Sigmoid colon (tissue), 7 donors: ENCODE measurements at regions of chr16 and their contacts with region 1.

Region 1: DNA sequence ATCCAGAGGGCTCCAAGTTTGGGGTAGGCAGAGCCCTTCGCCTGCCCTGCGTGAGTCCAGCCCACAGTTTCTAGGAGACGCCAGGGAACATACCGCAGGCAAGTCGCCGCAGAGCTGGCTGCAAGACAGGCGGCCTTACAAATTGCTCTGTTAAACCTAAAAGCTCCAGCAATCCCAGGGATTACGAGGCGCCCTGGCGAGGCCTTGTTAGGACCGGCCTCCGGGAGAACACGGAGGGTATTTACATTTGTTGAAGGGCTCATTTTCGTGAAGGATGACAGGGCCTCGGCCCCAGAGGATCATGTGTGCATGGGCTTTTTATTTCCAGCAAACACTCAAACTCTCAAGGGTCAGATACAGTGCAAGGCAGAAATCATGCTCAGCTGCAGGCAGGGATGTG is 77.6 kb upstream of the FOXF1 start:
- DNase-seq: peak; percentile 95
- H3K4me3 ChIP-seq: no peak overlapping the region
- H3K27ac ChIP-seq: peak overlapping the region; percentile 81 to 91 (median 87)
- H3K4me1 ChIP-seq: peaks cover 0 to 67% (median 61%) of the 10 kb centered on the region in 4 donors
- H3K27me3 ChIP-seq: no peaks in the 10 kb centered on the region
- CTCF ChIP-seq: no peak
- EP300 ChIP-seq: peak; percentile 81 to 97 (median 86)
- POLR2A ChIP-seq: no peak

Region 2: DNA sequence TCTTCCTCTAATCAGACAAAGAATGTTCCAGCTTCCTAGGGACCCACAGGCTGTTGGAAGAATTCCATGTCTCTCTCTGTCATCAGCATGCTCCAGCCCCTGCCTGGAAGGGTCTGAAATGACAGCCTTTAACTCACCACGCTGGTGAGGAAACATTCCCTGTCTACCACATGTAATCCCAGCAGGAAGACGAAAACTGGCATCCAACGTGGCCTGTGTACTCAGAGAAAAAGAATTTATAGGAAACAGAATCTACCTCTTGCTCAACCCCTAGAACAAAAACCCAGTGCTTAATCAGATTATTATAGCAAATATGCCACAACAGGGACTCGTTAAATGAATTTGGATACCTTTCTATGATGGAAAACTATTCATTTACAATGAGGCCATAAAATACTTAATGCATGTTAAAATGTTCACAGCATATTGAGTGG is 69.6 kb before region 1 on chr16:
- intact Hi-C with region 1: loop called (anchors 2 kb)
- DNase-seq: peak; percentile 88
- H3K4me3 ChIP-seq: no peak overlapping the region
- H3K27ac ChIP-seq: peak overlapping the region; percentile 83 to 89 (median 85)
- H3K4me1 ChIP-seq: peaks cover 0 to 56% (median 46%) of the 10 kb centered on the region in 4 donors
- H3K27me3 ChIP-seq: no peaks in the 10 kb centered on the region
- CTCF ChIP-seq: no peak
- EP300 ChIP-seq: peak in 3 of 4 donors; percentile 25 to 84 (median 52)
- POLR2A ChIP-seq: no peak

Region 3: DNA sequence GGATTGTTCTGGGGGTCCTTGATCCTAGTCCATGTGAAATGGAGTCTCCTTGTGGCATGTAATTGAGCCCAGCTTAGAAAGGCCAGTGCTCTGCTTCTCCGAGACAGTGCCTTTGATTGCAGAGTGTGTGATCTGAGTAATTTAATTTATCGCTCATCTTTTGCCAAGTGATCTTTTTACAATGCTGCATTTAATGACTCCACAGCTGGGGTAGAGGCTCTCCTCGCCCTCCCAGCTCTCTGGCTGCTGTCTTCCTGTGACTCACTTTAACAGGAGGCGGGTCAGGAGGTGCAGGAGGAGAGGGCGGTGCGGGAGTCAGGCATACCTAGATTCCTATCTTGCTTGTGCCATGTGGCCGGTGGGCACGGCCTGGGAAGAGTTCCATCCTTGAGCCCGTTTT is 35.8 kb before region 1 on chr16:
- intact Hi-C with region 1: loop called (anchors 2 kb)
- DNase-seq: peak; percentile 95
- H3K4me3 ChIP-seq: peak overlapping the region in 1 of 4 donors; percentile 12
- H3K27ac ChIP-seq: peak overlapping the region; percentile 88 to 94 (median 91)
- H3K4me1 ChIP-seq: peaks cover 0 to 28% (median 23%) of the 10 kb centered on the region in 4 donors
- H3K27me3 ChIP-seq: no peaks in the 10 kb centered on the region
- CTCF ChIP-seq: no peak
- EP300 ChIP-seq: peak; percentile 52 to 92 (median 73)
- POLR2A ChIP-seq: no peak

Region 4: GRCh38 chr16:86498661-86499439 is 66.2 kb after region 1 on chr16:
- intact Hi-C with region 1: loop called (anchors 2 kb)
- DNase-seq: peak; percentile 88
- H3K4me3 ChIP-seq: peak overlapping the region; percentile 65 to 84 (median 68)
- H3K27ac ChIP-seq: peak overlapping the region; percentile 99 to 100 (median 99)
- H3K4me1 ChIP-seq: peaks cover 0 to 81% (median 59%) of the 10 kb centered on the region in 4 donors
- H3K27me3 ChIP-seq: peaks cover 0 to 31% (median 0%) of the 10 kb centered on the region in 3 donors
- CTCF ChIP-seq: no peak
- EP300 ChIP-seq: no peak
- POLR2A ChIP-seq: peak; percentile 8 to 9

Region 5: DNA sequence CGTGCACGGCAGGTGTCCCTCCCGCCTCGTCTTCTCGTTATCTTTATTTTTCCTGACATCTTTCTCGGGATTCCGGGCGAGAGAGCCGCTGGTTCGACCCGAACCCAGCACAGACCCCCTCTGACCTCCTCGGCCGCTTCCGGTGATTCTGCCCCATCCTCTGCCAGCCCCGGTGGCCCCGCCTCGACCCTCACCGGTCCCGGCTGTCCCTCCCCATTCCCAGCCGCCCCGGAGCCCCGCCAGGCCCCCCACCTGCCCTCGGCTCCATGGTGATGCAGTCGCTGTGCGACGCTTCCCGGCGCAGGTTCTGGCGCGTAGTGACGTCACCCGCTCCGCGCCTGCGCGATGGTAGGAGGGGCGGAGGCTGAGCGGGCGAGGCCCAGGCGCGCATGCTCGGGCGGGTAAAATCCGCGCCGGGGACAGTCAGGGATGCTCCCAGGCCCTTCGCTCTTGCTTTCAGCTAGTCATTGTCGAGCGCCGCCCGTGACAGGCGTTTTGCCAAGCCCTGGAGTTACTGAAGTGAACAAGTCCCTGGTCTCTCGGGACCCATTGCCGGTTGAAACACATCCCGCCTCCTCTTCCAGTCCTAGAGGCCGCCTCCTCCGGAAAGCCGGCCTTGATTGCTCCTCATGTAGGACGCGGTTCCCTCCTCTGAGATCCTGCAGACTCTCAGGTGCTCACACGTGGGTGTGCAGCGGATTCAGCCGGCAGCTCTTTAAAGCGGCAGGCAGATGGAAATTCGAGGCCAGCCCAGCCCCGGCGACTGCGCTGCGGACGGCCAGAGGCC is 122.4 kb after region 1 on chr16 and contains the start of gene MTHFSD:
- intact Hi-C with region 1: no loop called
- DNase-seq: peak; percentile 96
- H3K4me3 ChIP-seq: peak within 1 kb of the TSS; percentile 69 to 85 (median 70)
- H3K27ac ChIP-seq: peak within 1 kb of the TSS; percentile 84 to 86 (median 84)
- H3K4me1 ChIP-seq: peaks cover 2 to 22% (median 13%) of the 10 kb centered on the region in 4 donors
- H3K27me3 ChIP-seq: peaks cover 0 to 17% (median 8%) of the 10 kb centered on the region in 3 donors
- CTCF ChIP-seq: no peak
- EP300 ChIP-seq: peak in 1 of 4 donors; percentile 58
- POLR2A ChIP-seq: peak; percentile 58
- total RNA-seq, gene MTHFSD: 10.7 to 18.8 (median 11.9) TPM